Naive thymus-derived CD4-positive, alpha-beta T cell (primary cell): ENCODE measurements at regions of chr6 and their contacts with region 1.

Region 1: DNA sequence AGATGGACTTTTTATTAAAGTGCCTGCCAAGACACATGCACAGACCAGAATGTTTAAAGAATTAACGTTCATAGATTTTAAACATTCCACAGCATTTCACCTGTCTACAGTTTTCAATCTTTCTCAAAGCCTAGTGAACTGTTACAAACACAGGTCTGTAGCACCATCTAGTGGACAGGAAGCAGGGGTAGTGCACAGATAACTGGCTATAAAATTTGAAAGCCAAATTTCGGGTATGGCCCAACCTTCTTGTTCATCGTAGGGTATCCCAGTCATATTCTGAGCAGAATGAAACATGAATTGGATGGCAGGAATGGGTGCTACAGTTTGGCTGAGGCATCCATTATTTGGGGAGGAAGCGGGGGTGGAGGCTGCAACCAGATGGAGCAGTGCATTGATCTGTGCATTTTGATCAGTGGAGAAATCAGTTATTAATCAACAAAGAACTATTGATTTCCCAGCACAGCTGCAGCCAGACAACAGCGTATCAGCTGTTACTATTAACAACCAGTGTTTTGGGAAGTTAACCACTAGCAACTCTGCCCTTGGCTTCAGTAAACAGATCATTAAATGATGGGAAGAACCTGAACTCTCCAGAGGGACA is 56.1 kb upstream of the B3GAT2 start:
- DNase-seq: peak in 5 of 9 donors; percentile 17 to 34 (median 26)
- ATAC-seq: peak; percentile 64
- H3K4me3 ChIP-seq: no peak overlapping the region
- H3K4me3 Mint-ChIP-seq: no peak overlapping the region
- H3K27ac ChIP-seq: no peak overlapping the region
- H3K27ac Mint-ChIP-seq: no peak overlapping the region
- H3K4me1 ChIP-seq: no peaks in the 10 kb centered on the region
- H3K4me1 Mint-ChIP-seq: no peaks in the 10 kb centered on the region
- H3K27me3 ChIP-seq: no peaks in the 10 kb centered on the region
- H3K27me3 Mint-ChIP-seq: peaks cover 7 to 41% (median 30%) of the 10 kb centered on the region in 5 donors

Region 2: GRCh38 chr6:70221025-70221714 is 791.8 kb before region 1 on chr6:
- CTCF ChIA-PET with region 1: no interaction called
- POLR2A ChIA-PET with region 1: no interaction called
- intact Hi-C with region 1: loop called (anchors 1 to 5 kb)
- DNase-seq: peak in 4 of 9 donors; percentile 3 to 16 (median 11)
- ATAC-seq: peak; percentile 50
- H3K4me3 ChIP-seq: no peak overlapping the region
- H3K4me3 Mint-ChIP-seq: no peak overlapping the region
- H3K27ac ChIP-seq: no peak overlapping the region
- H3K27ac Mint-ChIP-seq: no peak overlapping the region
- H3K4me1 ChIP-seq: no peaks in the 10 kb centered on the region
- H3K4me1 Mint-ChIP-seq: peaks cover 0 to 1% (median 0%) of the 10 kb centered on the region in 7 donors
- H3K27me3 ChIP-seq: no peaks in the 10 kb centered on the region
- H3K27me3 Mint-ChIP-seq: peaks cover 4 to 31% (median 7%) of the 10 kb centered on the region in 5 donors

Region 3: GRCh38 chr6:70310063-70310694 is 702.8 kb before region 1 on chr6:
- CTCF ChIA-PET with region 1: no interaction called
- POLR2A ChIA-PET with region 1: no interaction called
- intact Hi-C with region 1: loop called in 1 of 2 experiments (anchors 1 kb)
- DNase-seq: peak in 5 of 9 donors; percentile 7 to 21 (median 11)
- ATAC-seq: no peak
- H3K4me3 ChIP-seq: no peak overlapping the region
- H3K4me3 Mint-ChIP-seq: no peak overlapping the region
- H3K27ac ChIP-seq: no peak overlapping the region
- H3K27ac Mint-ChIP-seq: no peak overlapping the region
- H3K4me1 ChIP-seq: no peaks in the 10 kb centered on the region
- H3K4me1 Mint-ChIP-seq: peaks cover 0 to under 1% (median 0%) of the 10 kb centered on the region in 7 donors
- H3K27me3 ChIP-seq: no peaks in the 10 kb centered on the region
- H3K27me3 Mint-ChIP-seq: peaks cover 9 to 41% (median 28%) of the 10 kb centered on the region in 5 donors

Region 4: DNA sequence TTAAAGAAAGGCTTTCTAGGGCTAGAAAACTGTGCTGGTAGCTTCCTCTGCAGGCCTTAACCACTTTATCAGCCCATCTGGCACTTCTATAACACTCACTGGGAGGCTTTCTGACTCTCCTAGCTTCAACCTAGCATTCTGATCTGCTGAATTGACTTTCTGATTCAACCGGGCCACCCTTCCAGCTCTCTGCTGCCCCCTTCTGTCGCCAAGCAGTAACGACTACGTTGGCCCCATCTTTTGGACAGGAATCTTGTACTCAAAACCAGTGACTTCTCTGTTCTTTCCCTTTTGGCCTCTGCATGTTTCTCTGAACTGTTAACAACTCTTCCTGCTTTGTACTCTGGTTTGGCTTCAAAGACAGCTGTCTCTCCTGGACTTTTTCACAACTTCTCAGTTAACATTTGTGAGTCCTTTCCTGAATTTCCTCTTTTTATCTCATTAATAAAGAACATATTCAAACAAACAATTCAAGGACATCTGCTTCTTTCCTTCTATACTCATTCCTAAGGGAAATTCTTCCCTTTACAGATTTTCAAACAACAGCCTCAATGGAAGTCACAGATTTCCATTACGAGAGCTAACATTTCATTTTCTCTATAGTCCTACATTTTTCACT is 643.5 kb before region 1 on chr6:
- CTCF ChIA-PET with region 1: no interaction called
- POLR2A ChIA-PET with region 1: no interaction called
- intact Hi-C with region 1: loop called (anchors 1 kb)
- DNase-seq: peak; percentile 26 to 64 (median 58)
- ATAC-seq: peak; percentile 92
- H3K4me3 ChIP-seq: no peak overlapping the region
- H3K4me3 Mint-ChIP-seq: no peak overlapping the region
- H3K27ac ChIP-seq: no peak overlapping the region
- H3K27ac Mint-ChIP-seq: no peak overlapping the region
- H3K4me1 ChIP-seq: no peaks in the 10 kb centered on the region
- H3K4me1 Mint-ChIP-seq: peaks cover 0 to 7% (median 0%) of the 10 kb centered on the region in 7 donors
- H3K27me3 ChIP-seq: no peaks in the 10 kb centered on the region
- H3K27me3 Mint-ChIP-seq: peaks cover 10 to 39% (median 19%) of the 10 kb centered on the region in 5 donors

Region 5: DNA sequence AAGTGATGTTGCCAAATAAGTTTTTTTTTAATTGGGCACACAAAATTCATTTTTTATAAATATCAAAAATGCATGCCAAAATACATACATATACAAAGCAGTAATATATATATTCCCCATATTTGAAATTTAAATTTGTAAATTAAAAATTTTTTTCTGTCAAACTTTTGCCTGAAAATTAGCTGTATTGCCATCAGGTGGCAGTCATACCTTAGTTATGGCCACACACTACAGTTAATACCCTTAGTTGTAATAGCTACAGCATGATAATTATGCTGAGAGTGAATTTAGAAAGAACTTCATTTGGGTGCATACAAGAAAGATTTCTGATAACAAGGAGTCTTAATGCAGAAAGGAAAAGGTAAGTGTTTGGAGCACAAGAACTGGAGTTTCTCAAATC is 492.4 kb before region 1 on chr6:
- CTCF ChIA-PET with region 1: no interaction called
- POLR2A ChIA-PET with region 1: no interaction called
- intact Hi-C with region 1: loop called in 1 of 2 experiments (anchors 2 kb)
- DNase-seq: peak in 5 of 9 donors; percentile 11 to 32 (median 15)
- ATAC-seq: peak; percentile 47
- H3K4me3 ChIP-seq: no peak overlapping the region
- H3K4me3 Mint-ChIP-seq: no peak overlapping the region
- H3K27ac ChIP-seq: no peak overlapping the region
- H3K27ac Mint-ChIP-seq: no peak overlapping the region
- H3K4me1 ChIP-seq: no peaks in the 10 kb centered on the region
- H3K4me1 Mint-ChIP-seq: peaks cover 0 to 12% (median 9%) of the 10 kb centered on the region in 7 donors
- H3K27me3 ChIP-seq: no peaks in the 10 kb centered on the region
- H3K27me3 Mint-ChIP-seq: no peaks in the 10 kb centered on the region

Region 6: DNA sequence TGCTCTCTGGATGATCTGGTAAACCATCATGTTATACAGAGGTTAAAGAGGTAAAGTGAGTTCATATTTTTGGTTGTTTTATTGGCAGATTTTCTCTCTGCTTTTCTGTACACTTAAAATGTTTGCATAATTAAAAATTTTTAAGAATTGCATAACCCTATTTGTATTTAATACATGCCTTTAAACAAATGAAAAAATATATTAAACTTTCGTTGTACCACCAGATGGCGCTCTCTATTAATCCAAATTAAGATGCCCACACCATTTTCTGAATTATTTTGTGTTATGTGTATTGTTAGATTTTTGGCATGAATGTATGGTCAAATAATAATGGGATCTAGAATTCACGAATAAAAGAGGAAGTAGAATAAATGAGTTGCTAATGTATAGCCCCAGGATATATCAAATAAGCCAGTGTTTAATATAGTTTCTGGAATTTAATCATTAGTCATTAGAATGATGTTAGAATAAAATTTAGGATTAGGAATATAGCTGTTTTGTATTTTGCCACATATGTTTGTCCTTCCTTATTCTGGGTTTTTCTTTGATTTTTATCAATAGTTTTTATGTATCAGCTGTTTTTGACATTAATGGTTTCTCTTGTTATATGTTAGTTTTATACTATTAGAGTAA is 306.4 kb before region 1 on chr6:
- CTCF ChIA-PET with region 1: interaction called, 3 read pairs
- POLR2A ChIA-PET with region 1: no interaction called
- intact Hi-C with region 1: loop called (anchors 2 kb)
- DNase-seq: peak in 6 of 9 donors; percentile 14 to 50 (median 45)
- ATAC-seq: peak; percentile 47
- H3K4me3 ChIP-seq: no peak overlapping the region
- H3K4me3 Mint-ChIP-seq: no peak overlapping the region
- H3K27ac ChIP-seq: no peak overlapping the region
- H3K27ac Mint-ChIP-seq: no peak overlapping the region
- H3K4me1 ChIP-seq: peaks cover 5% of the 10 kb centered on the region in 2 donors
- H3K4me1 Mint-ChIP-seq: peaks cover 25 to 73% (median 59%) of the 10 kb centered on the region in 7 donors
- H3K27me3 ChIP-seq: no peaks in the 10 kb centered on the region
- H3K27me3 Mint-ChIP-seq: no peaks in the 10 kb centered on the region